ENCODE measurements at regions of chr17 and their contacts with region 1.

Region 1: DNA sequence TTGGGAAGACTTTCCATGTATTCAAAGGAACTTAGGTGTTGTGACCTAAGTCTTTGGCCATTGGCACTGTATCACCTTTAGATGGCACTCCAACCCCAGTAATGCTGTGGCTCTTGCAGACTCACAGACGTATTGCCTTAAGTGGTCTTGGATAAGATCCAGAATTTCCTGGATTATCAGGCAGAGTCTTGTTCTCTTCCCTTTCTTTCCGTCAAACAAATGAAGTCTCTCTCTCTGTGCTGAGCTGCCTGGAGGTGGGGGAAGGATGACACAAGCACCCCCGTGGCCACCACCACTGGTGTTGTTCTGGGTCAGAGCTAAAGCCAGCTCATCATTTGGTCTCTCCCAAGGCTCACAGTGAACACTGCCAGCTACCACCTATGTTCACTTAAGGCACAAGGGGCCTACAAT is 789.9 kb upstream of the KIF2B start:
- DNase-seq: peak; percentile 8
- H3K4me3 Mint-ChIP-seq: no peak overlapping the region
- H3K27ac Mint-ChIP-seq: no peak overlapping the region
- H3K4me1 Mint-ChIP-seq: no peaks in the 10 kb centered on the region
- H3K27me3 Mint-ChIP-seq: no peaks in the 10 kb centered on the region
- CTCF ChIP-seq: no peak

Region 2: DNA sequence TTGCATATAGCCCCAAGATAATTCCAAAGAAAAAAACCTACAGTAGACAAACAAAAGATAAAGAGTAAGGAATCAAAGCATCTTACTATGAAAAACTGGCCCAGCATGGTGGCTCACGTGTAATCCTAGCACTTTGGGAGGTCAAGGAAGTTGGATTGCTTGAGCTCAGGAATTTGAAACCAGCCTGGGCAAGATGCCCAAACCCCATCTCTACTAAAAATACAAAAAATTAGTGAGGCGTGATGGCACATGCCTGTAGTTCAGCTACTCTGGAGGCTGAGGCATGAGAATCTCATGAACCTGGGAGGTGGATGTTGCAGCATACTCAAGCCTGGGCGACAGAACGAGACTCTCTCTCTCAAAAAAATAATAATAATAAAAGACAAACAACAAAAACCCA is 25.2 kb after region 1 on chr17:
- CTCF ChIA-PET with region 1: no interaction called
- intact Hi-C with region 1: no loop called
- DNase-seq: no peak
- H3K4me3 Mint-ChIP-seq: no peak overlapping the region
- H3K27ac Mint-ChIP-seq: no peak overlapping the region
- H3K4me1 Mint-ChIP-seq: no peaks in the 10 kb centered on the region
- H3K27me3 Mint-ChIP-seq: no peaks in the 10 kb centered on the region
- CTCF ChIP-seq: no peak

Region 3: DNA sequence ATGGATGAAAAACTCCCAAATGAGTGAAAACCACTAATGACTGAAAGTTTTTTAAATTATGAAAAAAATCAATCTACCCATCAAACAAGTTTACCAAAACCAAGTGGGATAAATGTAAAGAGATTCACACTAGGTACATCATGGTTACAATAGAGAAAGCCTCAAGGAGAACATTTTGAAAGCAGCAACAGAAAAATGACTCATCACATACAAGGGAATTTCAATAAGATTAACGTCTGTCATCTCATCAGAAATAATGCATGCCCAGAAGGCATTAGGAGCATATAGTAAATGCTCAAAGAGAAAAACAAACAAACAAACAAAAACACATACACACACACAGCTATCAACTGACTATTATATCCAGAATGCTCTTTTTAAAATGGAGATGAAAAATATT is 528.1 kb after region 1 on chr17:
- CTCF ChIA-PET with region 1: no interaction called
- intact Hi-C with region 1: loop called (anchors 10 kb)
- DNase-seq: no peak
- H3K4me3 Mint-ChIP-seq: no peak overlapping the region
- H3K27ac Mint-ChIP-seq: no peak overlapping the region
- H3K4me1 Mint-ChIP-seq: no peaks in the 10 kb centered on the region
- H3K27me3 Mint-ChIP-seq: no peaks in the 10 kb centered on the region
- CTCF ChIP-seq: no peak

Region 4: DNA sequence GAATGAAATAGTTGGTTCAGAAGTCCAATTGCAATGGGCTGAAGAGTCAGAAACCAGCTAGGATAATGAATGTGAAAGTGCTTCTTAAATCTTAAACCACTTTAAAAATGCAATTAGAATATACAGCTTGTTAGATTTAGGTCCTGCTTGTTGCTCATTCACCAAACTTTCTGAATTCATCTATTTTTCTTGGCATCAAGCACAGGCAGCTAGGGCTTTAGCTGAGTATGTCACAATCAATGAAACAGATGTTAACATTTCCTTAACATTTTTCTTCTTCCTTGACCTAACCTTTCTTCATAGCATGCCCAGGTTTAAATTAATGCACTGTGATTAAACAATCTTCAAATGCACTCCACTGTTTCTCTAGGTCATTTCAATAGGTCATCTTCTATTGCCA is 804.3 kb after region 1 on chr17:
- CTCF ChIA-PET with region 1: no interaction called
- intact Hi-C with region 1: loop called (anchors 10 kb)
- DNase-seq: no peak
- H3K4me3 Mint-ChIP-seq: no peak overlapping the region
- H3K27ac Mint-ChIP-seq: no peak overlapping the region
- H3K4me1 Mint-ChIP-seq: peaks cover 14% of the 10 kb centered on the region
- H3K27me3 Mint-ChIP-seq: no peaks in the 10 kb centered on the region
- CTCF ChIP-seq: no peak

Region 5: DNA sequence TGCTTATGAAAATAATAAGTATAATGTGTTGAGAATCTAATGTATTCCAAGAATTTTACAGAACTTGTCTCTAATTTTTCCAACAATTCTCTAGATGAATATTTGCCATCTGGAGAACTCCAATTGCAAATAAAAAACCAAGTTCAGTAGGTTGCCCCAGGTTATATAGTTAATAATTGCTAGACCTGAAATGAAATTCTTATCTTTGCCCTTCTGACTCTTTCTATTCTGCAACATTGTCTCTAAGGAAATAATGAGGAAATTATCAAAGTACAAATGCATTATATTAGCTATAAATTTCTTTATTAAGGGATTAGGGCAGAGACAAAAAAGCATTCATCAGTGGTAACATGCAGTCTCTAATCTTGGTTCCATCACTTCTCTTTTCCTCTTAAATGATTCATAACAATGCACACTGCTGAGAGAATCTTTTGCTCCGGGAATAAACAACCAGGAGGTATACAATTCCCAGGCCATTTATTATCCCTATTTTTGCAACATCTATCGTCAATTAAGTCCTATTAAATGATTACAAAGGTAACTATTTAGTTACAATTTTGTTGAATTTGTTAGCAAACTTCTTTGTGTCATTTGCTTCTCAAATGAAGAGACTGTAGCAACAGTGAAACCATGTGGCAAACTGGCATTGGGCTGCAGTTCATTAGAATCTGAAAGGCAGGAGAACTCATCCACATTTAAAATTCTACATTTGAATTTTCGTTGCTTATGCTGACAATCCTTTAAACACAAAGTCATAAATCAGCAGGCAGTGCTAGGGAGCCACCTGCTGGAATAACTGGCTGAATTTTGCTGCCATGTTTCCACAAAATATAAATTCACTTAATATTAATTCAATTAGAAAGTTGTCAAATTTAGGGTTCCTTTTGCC is 1139.5 kb after region 1 on chr17:
- CTCF ChIA-PET with region 1: no interaction called
- intact Hi-C with region 1: loop called (anchors 2 kb)
- DNase-seq: peak; percentile 28
- H3K4me3 Mint-ChIP-seq: no peak overlapping the region
- H3K27ac Mint-ChIP-seq: no peak overlapping the region
- H3K4me1 Mint-ChIP-seq: no peaks in the 10 kb centered on the region
- H3K27me3 Mint-ChIP-seq: no peaks in the 10 kb centered on the region
- CTCF ChIP-seq: no peak

Region 6: DNA sequence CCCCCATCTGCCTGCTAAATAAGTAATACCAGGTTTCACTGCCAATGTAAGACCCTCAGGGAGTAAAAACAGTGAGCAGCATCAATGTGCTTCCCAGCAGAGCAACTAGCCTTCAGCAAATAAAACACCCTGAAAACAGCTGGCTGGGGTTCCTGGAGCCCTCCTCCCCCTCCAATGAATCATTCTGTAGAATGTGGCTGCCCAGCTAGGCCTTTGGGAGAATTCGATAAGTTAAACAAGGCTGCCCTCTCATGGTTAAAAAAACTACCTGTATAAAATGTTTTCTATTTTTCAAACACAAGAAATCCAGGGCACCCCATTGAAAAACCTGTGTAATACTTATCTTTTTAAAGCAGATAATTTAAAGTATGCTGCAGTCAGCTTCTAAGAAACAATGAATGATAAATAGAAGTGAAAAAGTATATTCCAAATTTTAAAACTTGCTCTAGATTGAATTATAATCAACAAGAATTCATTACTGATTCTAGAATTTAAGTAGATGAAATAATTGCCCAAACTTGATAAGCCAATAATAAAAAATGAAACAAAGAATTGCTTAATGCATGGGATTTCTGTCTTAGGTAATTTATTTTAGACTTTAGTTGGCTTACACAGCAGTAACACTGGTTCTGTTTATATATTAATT is 1858.4 kb after region 1 on chr17:
- CTCF ChIA-PET with region 1: no interaction called
- intact Hi-C with region 1: loop called (anchors 2 kb)
- DNase-seq: peak; percentile 28
- H3K4me3 Mint-ChIP-seq: no peak overlapping the region
- H3K27ac Mint-ChIP-seq: no peak overlapping the region
- H3K4me1 Mint-ChIP-seq: peaks cover 7% of the 10 kb centered on the region
- H3K27me3 Mint-ChIP-seq: no peaks in the 10 kb centered on the region
- CTCF ChIP-seq: peak; percentile 22